Lower leg skin (tissue), 4 donors: ENCODE measurements at regions of chr5 and their contacts with region 1.

Region 1: DNA sequence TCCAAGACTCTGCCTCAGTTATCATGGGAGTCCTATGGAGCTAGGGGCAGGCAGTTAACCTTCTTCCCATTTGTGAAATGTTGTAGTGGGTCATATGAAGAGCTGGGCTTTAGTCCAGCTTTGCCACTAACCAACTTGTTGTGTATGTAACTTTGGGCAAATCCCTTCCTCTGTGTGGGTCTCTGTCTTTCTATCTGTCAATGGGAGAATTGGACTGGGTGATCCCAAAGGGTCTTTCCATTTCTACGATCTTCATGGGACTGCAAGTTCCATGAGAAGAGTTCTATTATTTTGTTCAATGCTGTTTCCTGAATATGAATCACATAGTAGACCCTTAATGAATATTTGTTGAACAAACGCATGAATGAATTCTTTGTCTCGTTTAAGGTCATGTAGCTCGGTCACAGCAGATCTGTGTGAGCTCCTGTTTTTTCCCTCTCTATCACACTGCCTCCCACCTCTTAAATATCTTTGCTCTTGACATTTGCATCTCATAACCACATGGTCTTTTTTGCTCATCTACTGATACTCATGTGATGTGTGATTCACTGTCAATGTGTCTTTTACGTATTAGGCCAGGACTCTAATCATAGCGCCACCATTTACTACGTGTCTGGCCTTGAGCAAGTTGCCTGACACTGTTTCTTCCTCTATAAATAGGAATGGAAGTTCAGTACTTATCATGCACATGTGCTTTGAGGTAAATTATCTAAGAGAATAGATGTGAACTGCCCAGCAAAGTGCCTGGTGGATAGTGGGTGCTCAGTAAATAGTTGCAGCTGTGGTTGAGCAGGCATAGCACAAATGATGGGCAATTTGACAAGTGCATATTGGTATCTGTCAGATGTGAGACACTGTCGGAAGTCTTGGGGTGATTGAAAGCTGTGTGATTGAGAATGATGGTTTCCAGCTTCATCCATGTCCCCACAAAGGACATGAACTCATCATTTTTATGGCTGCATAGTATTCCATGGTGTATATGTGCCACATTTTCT is 37.4 kb downstream of the PTTG1 start:
- DNase-seq: no peak
- H3K4me3 ChIP-seq: no peak overlapping the region
- CTCF ChIP-seq: no peak
- POLR2A ChIP-seq: no peak

Region 2: GRCh38 chr5:160390787-160391696 is 68.1 kb before region 1 on chr5:
- intact Hi-C with region 1: no loop called
- DNase-seq: no peak
- H3K4me3 ChIP-seq: no peak overlapping the region
- CTCF ChIP-seq: no peak
- POLR2A ChIP-seq: no peak

Region 3: DNA sequence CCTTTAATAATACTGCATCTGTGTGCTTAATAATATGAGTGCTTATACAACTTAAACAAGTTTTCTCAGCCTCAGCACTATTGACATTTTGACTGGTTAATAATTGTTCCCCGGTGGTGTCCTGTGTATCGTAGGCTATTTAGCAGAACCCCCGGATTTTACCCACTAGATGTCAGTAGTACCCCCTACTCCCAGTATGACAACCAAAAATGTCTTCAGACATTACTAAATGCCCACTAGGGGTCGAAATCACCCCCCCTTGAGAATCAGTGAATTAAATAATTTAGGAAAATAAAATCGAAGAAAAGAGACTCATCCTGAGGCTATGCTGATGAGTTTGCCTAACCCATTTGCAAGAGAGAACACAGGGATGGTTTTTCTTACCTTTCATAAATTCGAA is 226.6 kb after region 1 on chr5:
- intact Hi-C with region 1: loop called (anchors 10 kb)
- DNase-seq: no peak
- H3K4me3 ChIP-seq: no peak overlapping the region
- CTCF ChIP-seq: no peak
- POLR2A ChIP-seq: no peak